Activated CD4-positive, alpha-beta T cell treated with anti-CD3 and anti-CD28 coated beads, Interleukin-2, amount 10 ng/mL, durations not matched to agents 24 days and 14 days (primary cell): ENCODE measurements at regions of chr2 and their contacts with region 1.

Region 1: GRCh38 chr2:198127627-198128026 is 323.2 kb downstream of the PLCL1 start:
- DNase-seq: peak; percentile 80
- H3K4me3 Mint-ChIP-seq: no peak overlapping the region
- H3K27ac Mint-ChIP-seq: no peak overlapping the region
- H3K4me1 Mint-ChIP-seq: peaks cover 4% of the 10 kb centered on the region
- H3K27me3 Mint-ChIP-seq: peaks cover 2% of the 10 kb centered on the region

Region 2: DNA sequence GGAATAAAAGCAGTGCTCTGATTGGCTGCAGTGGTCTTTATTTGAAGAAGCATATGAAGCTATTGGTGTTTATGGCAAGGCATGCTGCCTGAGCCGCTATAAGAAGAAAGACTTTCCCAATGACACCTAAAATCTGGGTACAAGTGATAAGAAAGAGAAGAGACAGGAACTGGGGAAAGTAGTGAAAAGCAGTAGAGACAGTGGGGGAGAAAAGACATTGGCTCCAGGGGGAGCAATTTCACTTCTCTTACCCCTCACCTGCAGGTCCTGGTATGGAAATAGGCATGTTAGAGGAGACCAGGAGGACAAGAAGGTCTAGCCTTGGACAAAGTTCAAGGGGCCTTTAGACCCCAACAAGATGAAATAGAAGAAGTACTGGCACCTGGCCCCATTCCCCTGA is 276.2 kb before region 1 on chr2:
- intact Hi-C with region 1: loop called (anchors 5 kb)
- DNase-seq: no peak
- H3K4me3 Mint-ChIP-seq: no peak overlapping the region
- H3K27ac Mint-ChIP-seq: no peak overlapping the region
- H3K4me1 Mint-ChIP-seq: peaks cover 20% of the 10 kb centered on the region
- H3K27me3 Mint-ChIP-seq: no peaks in the 10 kb centered on the region

Region 3: GRCh38 chr2:198053776-198054698 is 73.6 kb before region 1 on chr2:
- intact Hi-C with region 1: loop called (anchors 5 kb)
- DNase-seq: peak; percentile 78
- H3K4me3 Mint-ChIP-seq: no peak overlapping the region
- H3K27ac Mint-ChIP-seq: no peak overlapping the region
- H3K4me1 Mint-ChIP-seq: peaks cover 2% of the 10 kb centered on the region
- H3K27me3 Mint-ChIP-seq: no peaks in the 10 kb centered on the region

Region 4: GRCh38 chr2:198231562-198231961 is 103.9 kb after region 1 on chr2:
- intact Hi-C with region 1: no loop called
- DNase-seq: no peak
- H3K4me3 Mint-ChIP-seq: no peak overlapping the region
- H3K27ac Mint-ChIP-seq: no peak overlapping the region
- H3K4me1 Mint-ChIP-seq: no peaks in the 10 kb centered on the region
- H3K27me3 Mint-ChIP-seq: peaks cover 7% of the 10 kb centered on the region

Region 5: GRCh38 chr2:198296665-198297308 is 169.2 kb after region 1 on chr2:
- intact Hi-C with region 1: loop called (anchors 10 kb)
- DNase-seq: peak; percentile 84
- H3K4me3 Mint-ChIP-seq: no peak overlapping the region
- H3K27ac Mint-ChIP-seq: no peak overlapping the region
- H3K4me1 Mint-ChIP-seq: no peaks in the 10 kb centered on the region
- H3K27me3 Mint-ChIP-seq: peaks cover 2% of the 10 kb centered on the region